ENCODE measurements at regions of chr2 and their contacts with region 1.

Region 1: GRCh38 chr2:178522950-178523595 is 42.8 kb downstream of the PLEKHA3 start:
- DNase-seq: peak; percentile 75 to 90 (median 86)
- ATAC-seq: peak; percentile 69 to 89 (median 86)
- H3K4me3 ChIP-seq: peak overlapping the region; percentile 28 to 75 (median 64)
- H3K27ac ChIP-seq: peak overlapping the region in 11 of 12 donors; percentile 46 to 83 (median 72)
- H3K4me1 ChIP-seq: peaks cover 0 to 14% (median 1%) of the 10 kb centered on the region in 12 donors
- H3K27me3 ChIP-seq: no peaks in the 10 kb centered on the region
- CTCF ChIP-seq: peak; percentile 59 to 88 (median 72)
- POLR2A ChIP-seq: peak in 1 of 2 donors; percentile 49

Region 2: DNA sequence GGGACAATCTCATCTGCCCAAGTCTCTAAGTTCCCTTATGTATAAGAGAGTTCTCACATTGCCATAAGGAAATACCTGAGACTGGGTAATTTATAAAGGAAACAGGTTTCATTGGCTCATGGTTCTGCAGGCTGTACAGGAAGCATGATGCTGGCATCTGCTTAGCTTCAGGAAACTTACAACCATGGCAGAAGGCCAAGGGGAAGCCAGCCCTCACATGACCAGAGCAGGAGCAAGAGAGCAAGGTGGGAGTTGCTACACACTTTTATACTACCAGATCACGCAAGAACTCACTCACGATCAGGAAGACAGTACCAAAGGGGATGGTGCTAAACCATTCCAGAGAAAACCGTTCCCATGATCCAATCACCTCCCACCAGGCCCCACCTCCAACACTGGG is 146.0 kb before region 1 on chr2:
- intact Hi-C with region 1: no loop called
- DNase-seq: no peak
- ATAC-seq: no peak
- H3K4me3 ChIP-seq: no peak overlapping the region
- H3K27ac ChIP-seq: no peak overlapping the region
- H3K4me1 ChIP-seq: no peaks in the 10 kb centered on the region
- H3K27me3 ChIP-seq: no peaks in the 10 kb centered on the region
- CTCF ChIP-seq: no peak
- POLR2A ChIP-seq: no peak

Region 3: DNA sequence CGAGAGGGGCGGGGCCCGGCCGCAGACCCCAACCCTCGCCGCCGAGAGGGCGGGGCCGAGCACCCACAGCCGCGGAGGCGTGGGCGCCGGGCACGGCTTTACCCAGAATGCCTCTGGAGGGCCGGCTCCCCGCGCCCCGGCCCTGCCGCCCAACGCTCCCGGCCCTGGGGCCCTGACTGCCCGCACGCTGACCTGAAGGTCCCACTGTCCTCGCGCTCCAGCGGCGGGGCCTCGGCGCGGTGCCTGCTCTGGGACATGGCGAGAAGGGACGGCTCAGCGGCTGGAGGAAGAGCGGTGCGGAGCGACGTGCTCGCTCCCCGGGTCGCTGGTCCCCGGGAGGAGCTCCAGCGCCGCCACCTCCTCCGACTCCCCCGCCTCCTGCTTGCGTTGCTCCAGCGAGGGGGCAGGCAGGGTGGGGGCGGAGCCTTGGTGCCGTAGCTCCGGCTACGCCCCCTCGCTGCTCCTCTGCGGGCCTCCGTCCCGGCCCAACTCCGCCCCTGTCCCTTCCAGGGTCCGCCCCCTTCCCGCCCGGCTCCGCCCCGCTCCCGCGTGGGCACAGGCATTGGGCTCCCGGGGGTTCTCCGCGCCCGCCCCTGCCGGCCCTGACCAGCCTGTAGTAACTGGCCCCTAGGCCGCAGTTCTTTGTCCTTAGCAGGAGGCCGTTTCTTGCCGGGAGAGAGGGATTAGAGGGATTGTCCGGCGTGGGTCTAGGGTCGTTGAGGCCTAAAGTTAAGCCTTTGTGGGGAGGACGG is 72.1 kb before region 1 on chr2 and contains the starts of genes PJVK and PRKRA:
- intact Hi-C with region 1: loop called in 1 of 10 experiments (anchors 5 kb)
- DNase-seq: peak; percentile 97 to 99 (median 98)
- ATAC-seq: peak; percentile 98 to 99 (median 98)
- H3K4me3 ChIP-seq: peak within 1 kb of the TSS; percentile 74 to 96 (median 90)
- H3K27ac ChIP-seq: peak within 1 kb of the TSS; percentile 88 to 99 (median 98)
- H3K4me1 ChIP-seq: peaks cover 0 to 35% (median 26%) of the 10 kb centered on the region in 12 donors
- H3K27me3 ChIP-seq: no peaks in the 10 kb centered on the region
- CTCF ChIP-seq: peak in 6 of 12 donors; percentile 3 to 43 (median 11)
- POLR2A ChIP-seq: peak; percentile 80 to 94
- total RNA-seq, gene PJVK: 0.48 to 1.7 (median 1.5) TPM in 8 of 9 donors, not detected in the other
- total RNA-seq, gene PRKRA: 35.2 to 64.3 (median 49.5) TPM

Region 4: GRCh38 chr2:178478439-178479274 is 44.4 kb before region 1 on chr2 and contains the start of gene FKBP7:
- intact Hi-C with region 1: loop called in 4 of 10 experiments (anchors 2 to 5 kb)
- DNase-seq: peak; percentile 88 to 93 (median 90)
- ATAC-seq: peak; percentile 82 to 90 (median 83)
- H3K4me3 ChIP-seq: peak within 1 kb of the TSS; percentile 42 to 85 (median 72)
- H3K27ac ChIP-seq: peak within 1 kb of the TSS; percentile 49 to 97 (median 94)
- H3K4me1 ChIP-seq: peaks cover 5 to 57% (median 40%) of the 10 kb centered on the region in 12 donors
- H3K27me3 ChIP-seq: no peaks in the 10 kb centered on the region
- CTCF ChIP-seq: peak; percentile 47 to 77 (median 67)
- POLR2A ChIP-seq: peak in 1 of 2 donors; percentile 68
- total RNA-seq, gene FKBP7: 6.2 to 11.8 (median 9.0) TPM

Region 5: GRCh38 chr2:178761759-178762371 is 238.8 kb after region 1 on chr2:
- intact Hi-C with region 1: no loop called
- DNase-seq: no peak
- ATAC-seq: no peak
- H3K4me3 ChIP-seq: no peak overlapping the region
- H3K27ac ChIP-seq: no peak overlapping the region
- H3K4me1 ChIP-seq: peaks cover 0 to 18% (median 0%) of the 10 kb centered on the region in 12 donors
- H3K27me3 ChIP-seq: no peaks in the 10 kb centered on the region
- CTCF ChIP-seq: peak; percentile 17 to 67 (median 54)
- POLR2A ChIP-seq: no peak

Region 6: DNA sequence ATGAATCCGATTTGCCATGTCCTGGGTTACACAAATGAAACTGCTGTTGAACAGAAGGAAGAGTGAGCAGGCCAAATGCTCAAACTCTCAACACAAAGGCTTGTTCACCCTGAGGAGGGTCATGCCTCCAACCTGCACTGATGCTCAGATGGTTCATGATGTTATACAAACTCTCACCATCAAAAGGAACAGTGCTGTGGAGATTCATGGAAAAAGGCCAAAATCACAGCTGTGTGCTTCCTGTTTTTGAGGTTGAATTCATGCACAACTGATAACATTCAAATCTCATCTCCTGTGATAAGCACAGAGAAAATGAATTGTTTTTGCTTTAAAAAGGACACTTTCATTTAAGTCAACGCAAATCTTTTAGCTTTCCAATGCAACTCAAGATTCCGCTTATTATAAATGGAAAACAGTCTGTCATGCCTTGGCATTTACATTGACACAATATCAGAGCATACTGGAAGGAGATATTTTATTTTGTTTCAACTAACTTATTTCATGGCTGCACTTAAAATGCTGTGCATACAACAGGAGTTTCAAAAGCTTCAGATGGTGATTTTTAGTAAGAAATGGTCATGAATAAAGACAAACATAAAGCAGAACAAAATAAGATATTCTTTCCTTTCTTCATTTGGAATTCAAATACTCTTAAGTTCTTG is 306.4 kb after region 1 on chr2:
- intact Hi-C with region 1: no loop called
- DNase-seq: no peak
- ATAC-seq: peak; percentile 28 to 45 (median 32)
- H3K4me3 ChIP-seq: peak overlapping the region in 1 of 12 donors; percentile 24
- H3K27ac ChIP-seq: peak overlapping the region in 8 of 12 donors; percentile 1 to 66 (median 24)
- H3K4me1 ChIP-seq: peaks cover 0 to 39% (median 25%) of the 10 kb centered on the region in 12 donors
- H3K27me3 ChIP-seq: no peaks in the 10 kb centered on the region
- CTCF ChIP-seq: peak in 1 of 12 donors; percentile 7
- POLR2A ChIP-seq: no peak